ENCODE measurements at regions of chr20 and their contacts with region 1.

Region 1: DNA sequence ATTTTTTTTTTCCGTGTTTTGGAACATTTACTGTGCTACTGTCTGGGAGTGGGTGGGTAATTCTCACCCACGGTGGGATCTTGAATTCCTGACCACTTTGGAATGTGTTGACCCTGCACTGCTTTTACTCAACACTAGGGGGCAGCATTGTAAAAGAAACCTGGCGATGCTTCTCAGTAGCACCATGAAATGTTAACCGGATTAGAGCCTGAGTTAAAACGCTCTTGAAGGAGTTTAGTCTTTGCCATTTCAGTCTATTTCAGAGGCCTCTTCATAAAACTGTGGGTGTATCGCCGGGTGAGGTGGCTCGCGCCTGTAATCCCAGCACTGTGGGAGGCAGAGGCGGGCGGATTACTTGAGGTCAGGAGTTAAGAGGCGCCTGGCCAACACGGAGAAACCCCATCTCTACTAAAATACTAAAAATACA is 114.4 kb upstream of the PRND start:
- DNase-seq: peak; percentile 30 to 83 (median 57)
- H3K4me3 ChIP-seq: no peak overlapping the region
- H3K27ac ChIP-seq: no peak overlapping the region
- H3K4me1 ChIP-seq: no peaks in the 10 kb centered on the region
- H3K27me3 ChIP-seq: peaks cover 22% of the 10 kb centered on the region
- CTCF ChIP-seq: peak; percentile 94 to 99 (median 96)
- POLR2A ChIP-seq: no peak

Region 2: GRCh38 chr20:4341804-4342485 is 265.4 kb before region 1 on chr20:
- intact Hi-C with region 1: no loop called
- DNase-seq: no peak
- H3K4me3 ChIP-seq: no peak overlapping the region
- H3K27ac ChIP-seq: no peak overlapping the region
- H3K4me1 ChIP-seq: no peaks in the 10 kb centered on the region
- H3K27me3 ChIP-seq: peaks cover 7% of the 10 kb centered on the region
- CTCF ChIP-seq: no peak
- POLR2A ChIP-seq: no peak

Region 3: DNA sequence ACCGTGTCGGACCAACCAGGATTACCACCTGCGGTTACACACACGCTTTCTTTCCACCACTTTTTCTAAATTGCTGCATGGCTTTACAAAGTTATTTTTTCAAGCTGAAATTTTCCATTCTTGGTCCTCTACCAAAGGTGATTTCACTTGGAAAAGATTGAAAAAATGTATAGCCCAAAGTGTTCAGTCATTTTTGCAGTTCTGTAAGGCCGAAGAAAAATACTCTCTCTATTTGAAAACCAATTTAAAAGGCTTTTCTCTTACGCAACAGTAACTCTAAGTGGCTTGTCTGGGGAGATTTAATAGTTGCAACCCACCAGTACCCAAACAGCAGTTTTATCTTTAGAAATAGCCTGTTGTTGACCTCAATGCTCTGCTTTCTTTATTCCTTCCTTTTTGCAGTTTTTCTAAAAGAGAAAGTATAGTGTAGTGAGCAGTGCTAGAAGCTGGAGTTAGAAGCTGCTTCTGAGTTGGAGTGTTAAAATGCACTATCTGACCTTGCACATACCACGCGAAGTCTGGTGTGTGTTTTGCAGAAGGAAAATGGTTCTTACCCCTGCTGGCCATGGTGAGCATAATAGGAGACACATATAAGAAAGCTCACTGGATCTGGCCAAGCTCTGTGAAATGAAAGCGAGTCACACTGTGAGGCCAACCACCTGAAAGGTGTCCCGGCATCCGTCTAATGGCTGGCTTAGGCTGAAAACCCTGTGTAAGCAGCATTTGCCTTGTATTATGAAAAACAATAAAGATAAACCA is 157.2 kb before region 1 on chr20:
- intact Hi-C with region 1: no loop called
- DNase-seq: peak in 1 of 7 donors; percentile 19
- H3K4me3 ChIP-seq: no peak overlapping the region
- H3K27ac ChIP-seq: no peak overlapping the region
- H3K4me1 ChIP-seq: no peaks in the 10 kb centered on the region
- H3K27me3 ChIP-seq: no peaks in the 10 kb centered on the region
- CTCF ChIP-seq: peak in 3 of 6 experiments; percentile 14 to 34 (median 15)
- POLR2A ChIP-seq: no peak

Region 4: GRCh38 chr20:4720041-4720976 is 113.0 kb after region 1 on chr20:
- intact Hi-C with region 1: loop called (anchors 2 kb)
- DNase-seq: peak; percentile 72 to 88 (median 79)
- H3K4me3 ChIP-seq: no peak overlapping the region
- H3K27ac ChIP-seq: peak overlapping the region in 3 of 5 donors; percentile 20 to 85 (median 58)
- H3K4me1 ChIP-seq: peaks cover 7 to 14% of the 10 kb centered on the region in 2 donors
- H3K27me3 ChIP-seq: no peaks in the 10 kb centered on the region
- CTCF ChIP-seq: peak; percentile 55 to 94 (median 84)
- POLR2A ChIP-seq: no peak

Measured in adrenal gland (tissue), 19 donors.